Activated CD8-positive, alpha-beta T cell treated with anti-CD3 and anti-CD28 coated beads for 36 hours (primary cell): ENCODE measurements at regions of chr9 and their contacts with region 1.

Region 1: GRCh38 chr9:98315551-98316060 is 60.2 kb upstream of the TBC1D2 start:
- DNase-seq: peak; percentile 92
- ATAC-seq: peak; percentile 98
- H3K4me3 Mint-ChIP-seq: no peak overlapping the region
- H3K27ac Mint-ChIP-seq: no peak overlapping the region
- H3K4me1 Mint-ChIP-seq: no peaks in the 10 kb centered on the region
- H3K27me3 Mint-ChIP-seq: no peaks in the 10 kb centered on the region
- CTCF ChIP-seq: peak; percentile 78

Region 2: GRCh38 chr9:98192503-98193335 is 122.9 kb before region 1 on chr9 and contains the start of gene CORO2A:
- CTCF ChIA-PET with region 1: no interaction called
- POLR2A ChIA-PET with region 1: no interaction called
- intact Hi-C with region 1: no loop called
- DNase-seq: peak; percentile 81
- ATAC-seq: peak; percentile 80
- H3K4me3 Mint-ChIP-seq: peak within 1 kb of the TSS; percentile 81
- H3K27ac Mint-ChIP-seq: peak within 1 kb of the TSS; percentile 49
- H3K4me1 Mint-ChIP-seq: peaks cover 32% of the 10 kb centered on the region
- H3K27me3 Mint-ChIP-seq: no peaks in the 10 kb centered on the region
- CTCF ChIP-seq: peak; percentile 25
- total RNA-seq, gene CORO2A: 12.2 to 13.4 TPM

Region 3: DNA sequence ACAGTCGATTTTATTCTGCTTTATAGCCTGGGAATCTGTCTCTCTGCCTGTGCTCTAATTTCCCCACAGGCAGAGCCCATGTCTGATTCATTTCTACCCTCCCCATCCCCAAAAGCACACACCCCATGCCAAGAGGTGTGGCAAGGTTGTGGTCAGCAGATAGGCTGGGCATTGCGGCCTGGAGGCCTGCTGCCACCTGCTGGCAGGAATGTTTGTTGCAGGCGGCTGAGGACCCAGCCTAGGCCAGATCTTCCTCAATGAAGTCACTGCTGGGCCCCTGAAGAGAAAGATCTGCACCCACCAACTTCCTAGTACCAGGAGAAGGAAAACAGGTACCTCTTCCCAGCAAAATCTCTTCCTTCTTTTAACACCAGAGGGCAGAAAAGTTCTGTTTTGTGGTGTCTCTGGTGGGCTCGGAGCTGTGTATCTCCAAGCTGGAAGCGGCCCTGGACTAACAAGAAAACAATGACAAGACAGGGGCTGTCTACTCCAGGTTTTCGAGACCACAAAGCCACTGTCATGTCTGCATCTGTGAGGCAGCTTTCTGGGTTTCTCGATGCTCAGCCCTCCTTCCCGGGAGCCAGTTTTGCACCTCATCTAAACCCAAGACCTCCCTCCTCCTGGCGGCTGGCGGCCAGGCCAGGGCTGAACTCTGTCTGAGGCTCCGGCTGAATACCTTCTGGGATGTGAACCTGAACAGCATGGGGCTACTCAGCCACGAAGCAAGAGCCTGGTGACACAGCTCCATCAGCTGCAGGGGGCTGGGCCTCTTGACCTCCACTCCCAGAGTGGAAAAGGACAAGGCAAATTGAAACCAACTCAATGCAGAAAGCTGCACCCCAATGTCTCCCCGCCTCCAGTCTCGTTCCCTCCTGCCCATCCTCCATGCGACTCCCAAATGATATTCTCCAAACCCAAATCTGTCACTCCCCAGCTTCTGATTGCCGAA is 475.8 kb after region 1 on chr9:
- CTCF ChIA-PET with region 1: interaction called, 16 read pairs
- POLR2A ChIA-PET with region 1: no interaction called
- intact Hi-C with region 1: no loop called
- DNase-seq: peak; percentile 74
- ATAC-seq: peak; percentile 77
- H3K4me3 Mint-ChIP-seq: no peak overlapping the region
- H3K27ac Mint-ChIP-seq: no peak overlapping the region
- H3K4me1 Mint-ChIP-seq: peaks cover 28% of the 10 kb centered on the region
- H3K27me3 Mint-ChIP-seq: no peaks in the 10 kb centered on the region
- CTCF ChIP-seq: peak; percentile 98